Endothelial cell of umbilical vein (primary cell): ENCODE measurements at regions of chr5 and their contacts with region 1.

Region 1: DNA sequence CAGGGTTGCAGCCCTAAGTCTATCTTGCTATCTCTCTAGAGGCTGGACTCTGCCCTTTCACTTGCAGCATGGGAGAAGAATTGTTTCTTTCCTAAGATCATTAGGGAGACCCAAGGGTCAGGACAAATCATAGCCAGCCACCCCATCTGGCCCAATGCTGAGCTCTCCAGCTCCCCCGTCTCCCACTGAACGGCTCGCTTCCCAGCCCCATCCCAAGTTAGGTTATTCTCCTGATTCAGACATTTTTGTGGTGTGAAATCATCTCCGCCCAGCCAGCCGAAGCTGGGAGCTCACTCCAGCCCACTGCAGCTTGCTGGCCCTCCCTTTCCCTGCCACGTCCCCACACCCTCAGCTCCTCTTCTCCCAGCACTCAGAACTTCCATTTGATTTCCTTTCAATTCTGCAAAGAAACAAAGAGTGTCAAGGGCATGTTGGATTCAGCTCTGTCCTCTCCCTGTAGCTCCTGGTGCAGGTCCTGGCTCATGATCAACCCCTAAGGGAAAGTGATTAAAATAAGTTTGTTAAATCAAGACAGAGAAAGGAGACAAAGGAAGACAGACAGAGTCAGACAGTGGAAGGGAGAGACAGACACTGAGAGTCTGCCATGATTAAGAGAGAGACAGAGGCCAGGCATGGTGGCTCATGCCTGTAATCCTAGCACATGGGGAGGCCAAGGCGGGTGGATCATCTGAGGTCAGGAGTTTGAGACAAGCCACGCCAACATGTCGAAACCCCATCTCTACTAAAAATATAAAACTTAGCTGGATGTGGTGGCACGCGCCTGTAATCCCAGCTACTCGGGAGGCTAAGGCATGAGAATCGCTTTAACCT is 12.6 kb upstream of the SPARC start:
- DNase-seq: peak; percentile 94
- H3K4me3 ChIP-seq: no peak overlapping the region
- H3K27ac ChIP-seq: peak overlapping the region; percentile 93
- H3K4me1 ChIP-seq: peaks cover 12% of the 10 kb centered on the region
- H3K27me3 ChIP-seq: no peaks in the 10 kb centered on the region
- CTCF ChIP-seq: no peak
- POLR2A ChIP-seq: peak; percentile 62

Region 2: GRCh38 chr5:151719228-151720000 is 20.1 kb after region 1 on chr5:
- CTCF ChIA-PET with region 1: interaction called, 12 read pairs
- POLR2A ChIA-PET with region 1: interaction called, 3 read pairs
- dilution Hi-C with region 1: no loop called
- intact Hi-C with region 1: loop called (anchors 1 kb)
- DNase-seq: peak; percentile 60
- H3K4me3 ChIP-seq: no peak overlapping the region
- H3K27ac ChIP-seq: no peak overlapping the region
- H3K4me1 ChIP-seq: no peaks in the 10 kb centered on the region
- H3K27me3 ChIP-seq: no peaks in the 10 kb centered on the region
- CTCF ChIP-seq: peak; percentile 52 to 67
- POLR2A ChIP-seq: no peak

Region 3: GRCh38 chr5:151758430-151759241 is 59.4 kb after region 1 on chr5 and contains the start of gene ATOX1:
- CTCF ChIA-PET with region 1: no interaction called
- POLR2A ChIA-PET with region 1: no interaction called
- dilution Hi-C with region 1: no loop called
- intact Hi-C with region 1: no loop called
- DNase-seq: peak; percentile 94
- H3K4me3 ChIP-seq: peak within 1 kb of the TSS; percentile 59 to 86 (median 68)
- H3K27ac ChIP-seq: peak within 1 kb of the TSS; percentile 76
- H3K4me1 ChIP-seq: peaks cover 18% of the 10 kb centered on the region
- H3K27me3 ChIP-seq: no peaks in the 10 kb centered on the region
- CTCF ChIP-seq: peak in 1 of 2 donors; percentile 7
- POLR2A ChIP-seq: peak; percentile 96
- total RNA-seq, gene ATOX1: 113 and 130 TPM in 2 replicates

Region 4: GRCh38 chr5:152051499-152052454 is 352.5 kb after region 1 on chr5:
- CTCF ChIA-PET with region 1: no interaction called
- POLR2A ChIA-PET with region 1: no interaction called
- dilution Hi-C with region 1: no loop called
- intact Hi-C with region 1: no loop called
- DNase-seq: no peak
- H3K4me3 ChIP-seq: no peak overlapping the region
- H3K27ac ChIP-seq: no peak overlapping the region
- H3K4me1 ChIP-seq: no peaks in the 10 kb centered on the region
- H3K27me3 ChIP-seq: no peaks in the 10 kb centered on the region
- CTCF ChIP-seq: no peak
- POLR2A ChIP-seq: no peak